Endothelial cell of umbilical vein (primary cell): ENCODE measurements at regions of chr6 and their contacts with region 1.

Region 1: DNA sequence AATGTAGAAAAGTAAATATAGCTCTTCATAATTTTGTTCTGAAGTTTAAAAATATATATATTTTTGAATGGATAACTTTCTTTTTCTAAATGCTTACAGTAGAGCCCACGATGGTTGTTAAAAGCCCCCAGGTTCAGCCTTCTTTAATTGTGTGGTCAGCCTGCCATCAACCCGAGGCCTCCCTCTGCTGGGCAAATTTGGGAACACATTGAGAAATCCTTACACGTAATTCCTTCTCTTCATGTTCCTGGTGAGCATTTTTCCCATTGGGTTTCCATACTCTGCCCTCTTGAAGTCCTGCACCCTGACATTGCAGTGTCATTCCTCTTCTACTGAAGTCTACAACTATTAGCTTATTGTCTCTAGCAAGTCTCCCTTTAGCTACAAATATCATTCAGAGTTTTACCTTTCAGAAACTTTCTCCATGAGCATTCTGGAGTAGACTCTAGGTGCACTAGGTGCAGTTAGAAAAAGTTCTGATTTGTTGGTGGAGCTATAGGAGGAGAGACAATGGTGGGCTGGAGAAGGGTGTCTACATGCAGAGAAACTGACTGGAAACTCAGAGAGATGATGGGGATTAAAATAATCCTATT is 40.6 kb downstream of the TRIM38 start:
- DNase-seq: peak; percentile 74
- H3K4me3 ChIP-seq: no peak overlapping the region
- H3K27ac ChIP-seq: no peak overlapping the region
- H3K4me1 ChIP-seq: no peaks in the 10 kb centered on the region
- H3K27me3 ChIP-seq: no peaks in the 10 kb centered on the region
- CTCF ChIP-seq: peak; percentile 73 to 76
- POLR2A ChIP-seq: no peak

Region 2: DNA sequence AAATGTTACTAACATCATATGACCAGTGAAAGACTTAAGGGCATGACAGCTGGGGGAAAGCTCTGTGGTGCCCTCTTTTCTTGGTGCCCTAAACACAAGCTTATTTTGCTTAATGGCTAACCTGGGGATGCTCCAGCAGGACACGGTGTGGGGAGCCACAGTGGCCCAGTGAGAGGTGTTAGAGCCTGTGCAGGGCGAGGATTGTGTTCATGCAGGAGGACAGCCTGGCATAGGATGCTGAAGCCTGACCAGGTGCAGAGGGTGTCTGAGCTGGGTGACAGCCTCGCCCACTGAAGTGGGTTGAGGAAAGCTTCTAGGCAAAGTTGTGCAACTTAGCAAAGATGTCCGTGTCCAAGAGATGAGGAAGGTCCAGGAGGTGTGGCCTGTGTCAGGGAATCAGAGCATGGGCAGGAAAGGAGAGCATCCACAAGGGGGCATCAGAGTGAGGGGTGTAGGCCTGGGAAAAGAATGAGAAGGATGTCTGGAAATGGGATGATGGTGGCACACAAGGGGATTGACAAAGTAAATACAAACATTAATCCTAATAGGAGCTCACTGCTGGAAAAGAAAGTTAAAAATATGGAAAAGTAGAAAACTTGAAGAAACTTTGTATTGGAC is 214.8 kb before region 1 on chr6:
- CTCF ChIA-PET with region 1: interaction called, 33 read pairs
- POLR2A ChIA-PET with region 1: no interaction called
- dilution Hi-C with region 1: no loop called
- intact Hi-C with region 1: loop called (anchors 1 kb)
- DNase-seq: peak; percentile 69
- H3K4me3 ChIP-seq: no peak overlapping the region
- H3K27ac ChIP-seq: no peak overlapping the region
- H3K4me1 ChIP-seq: no peaks in the 10 kb centered on the region
- H3K27me3 ChIP-seq: no peaks in the 10 kb centered on the region
- CTCF ChIP-seq: peak; percentile 63 to 64
- POLR2A ChIP-seq: no peak

Region 3: DNA sequence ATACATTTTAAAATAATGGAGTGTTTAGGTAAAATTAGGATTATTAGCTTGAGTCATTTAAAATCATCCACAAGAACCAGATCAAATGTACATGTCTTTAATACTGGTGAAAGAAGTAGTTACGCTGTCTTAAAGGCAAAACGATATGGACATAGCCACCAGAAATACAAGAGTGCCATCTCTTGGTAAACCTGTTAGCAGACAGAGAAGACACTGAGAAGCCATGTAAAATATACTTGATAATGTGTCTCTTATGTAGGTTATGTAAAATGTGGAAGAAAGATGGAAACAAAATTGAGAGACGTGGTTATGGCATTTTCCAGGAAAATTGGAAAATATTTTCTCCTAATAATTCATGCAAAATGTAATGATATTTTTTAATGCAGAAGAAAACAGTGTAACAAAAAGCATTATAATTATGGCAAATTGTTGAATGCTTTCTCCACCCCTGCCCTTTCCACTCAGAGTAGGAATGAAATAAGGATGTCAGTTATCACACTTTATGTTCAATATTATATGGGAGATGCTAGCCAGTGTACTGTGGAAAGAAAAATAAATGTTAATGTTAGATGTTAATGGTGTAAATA is 60.5 kb before region 1 on chr6:
- CTCF ChIA-PET with region 1: no interaction called
- POLR2A ChIA-PET with region 1: no interaction called
- dilution Hi-C with region 1: no loop called
- intact Hi-C with region 1: loop called (anchors 2 kb)
- DNase-seq: peak; percentile 50
- H3K4me3 ChIP-seq: no peak overlapping the region
- H3K27ac ChIP-seq: no peak overlapping the region
- H3K4me1 ChIP-seq: no peaks in the 10 kb centered on the region
- H3K27me3 ChIP-seq: no peaks in the 10 kb centered on the region
- CTCF ChIP-seq: peak; percentile 10 to 17
- POLR2A ChIP-seq: no peak

Region 4: GRCh38 chr6:26020329-26021000 is 17.3 kb after region 1 on chr6:
- CTCF ChIA-PET with region 1: interaction called, 26 read pairs
- POLR2A ChIA-PET with region 1: interaction called, 11 read pairs
- dilution Hi-C with region 1: no loop called
- intact Hi-C with region 1: loop called (anchors 1 kb)
- DNase-seq: peak; percentile 96
- H3K4me3 ChIP-seq: peak overlapping the region; percentile 2 to 69 (median 53)
- H3K27ac ChIP-seq: peak overlapping the region; percentile 84
- H3K4me1 ChIP-seq: peaks cover 25% of the 10 kb centered on the region
- H3K27me3 ChIP-seq: no peaks in the 10 kb centered on the region
- CTCF ChIP-seq: no peak
- POLR2A ChIP-seq: peak; percentile 99

Region 5: DNA sequence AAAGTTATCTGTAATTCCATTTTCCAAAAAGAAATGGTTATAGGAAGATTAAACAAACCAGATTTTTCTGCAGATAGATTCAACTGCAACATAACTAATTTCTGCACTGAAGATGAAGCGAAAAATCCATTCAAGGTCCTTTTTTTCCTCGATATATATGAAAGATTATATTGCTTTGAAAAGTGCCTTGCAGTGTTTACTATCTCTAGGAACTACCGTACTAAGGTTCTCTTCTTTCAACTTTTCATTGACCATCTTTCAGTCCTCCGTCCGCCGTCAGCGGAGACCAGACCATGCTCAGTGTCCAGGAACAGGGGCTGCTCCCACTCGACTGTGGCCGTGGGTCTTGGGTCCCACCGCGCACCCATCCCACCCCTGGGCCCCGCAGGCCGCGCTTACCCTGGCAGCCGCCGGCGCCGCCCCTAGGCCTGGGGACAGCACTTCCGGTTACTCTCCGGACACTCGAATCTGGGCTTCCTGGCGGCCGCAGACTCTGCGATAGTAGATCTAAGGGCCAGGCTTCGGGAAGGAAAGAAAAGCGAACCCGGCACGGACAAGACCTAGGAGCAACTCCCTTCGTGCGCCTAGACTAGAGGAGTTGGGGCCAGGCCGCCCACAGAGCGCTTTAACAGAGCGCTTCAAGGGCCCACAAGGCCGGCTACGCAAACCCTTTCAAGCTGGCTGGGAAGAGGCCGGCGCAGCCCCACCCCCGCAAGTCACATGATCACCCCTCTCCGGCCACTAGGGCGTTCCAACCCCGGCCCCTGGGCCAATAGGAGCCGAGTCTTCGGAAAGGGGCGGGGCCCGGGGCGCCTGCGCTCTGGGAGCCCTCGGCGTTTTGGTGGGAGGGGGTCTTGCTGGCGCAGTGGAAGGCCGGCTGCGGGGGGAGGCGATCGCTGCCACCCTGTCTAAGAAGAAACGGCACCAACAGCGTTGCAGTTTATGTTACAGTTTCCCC is 656.1 kb after region 1 on chr6 and contains the start of gene ZNF322:
- CTCF ChIA-PET with region 1: no interaction called
- POLR2A ChIA-PET with region 1: no interaction called
- dilution Hi-C with region 1: no loop called
- intact Hi-C with region 1: no loop called
- DNase-seq: peak; percentile 95
- H3K4me3 ChIP-seq: peak within 1 kb of the TSS; percentile 53 to 89 (median 70)
- H3K27ac ChIP-seq: peak within 1 kb of the TSS; percentile 58
- H3K4me1 ChIP-seq: peaks cover 9% of the 10 kb centered on the region
- H3K27me3 ChIP-seq: peaks cover 6 to 13% of the 10 kb centered on the region in 2 experiments
- CTCF ChIP-seq: no peak
- POLR2A ChIP-seq: no peak
- total RNA-seq, gene ZNF322: 15.2 and 17.0 TPM in 2 replicates